BJ (cell line): ENCODE measurements at regions of chr2 and their contacts with region 1.

Region 1: GRCh38 chr2:27191053-27191829 is 20.6 kb upstream of the ATRAID start:
- DNase-seq: no peak
- H3K4me3 ChIP-seq: no peak overlapping the region
- H3K27me3 ChIP-seq: no peaks in the 10 kb centered on the region; the same call in 1 of the 2 replicates
- CTCF ChIP-seq: peak; percentile 74

Region 2: GRCh38 chr2:27095745-27096651 is 95.2 kb before region 1 on chr2:
- CTCF ChIA-PET with region 1: interaction called, 38 read pairs
- POLR2A ChIA-PET with region 1: no interaction called
- DNase-seq: no peak
- H3K4me3 ChIP-seq: no peak overlapping the region
- H3K27me3 ChIP-seq: no peaks in the 10 kb centered on the region
- CTCF ChIP-seq: no peak

Region 3: DNA sequence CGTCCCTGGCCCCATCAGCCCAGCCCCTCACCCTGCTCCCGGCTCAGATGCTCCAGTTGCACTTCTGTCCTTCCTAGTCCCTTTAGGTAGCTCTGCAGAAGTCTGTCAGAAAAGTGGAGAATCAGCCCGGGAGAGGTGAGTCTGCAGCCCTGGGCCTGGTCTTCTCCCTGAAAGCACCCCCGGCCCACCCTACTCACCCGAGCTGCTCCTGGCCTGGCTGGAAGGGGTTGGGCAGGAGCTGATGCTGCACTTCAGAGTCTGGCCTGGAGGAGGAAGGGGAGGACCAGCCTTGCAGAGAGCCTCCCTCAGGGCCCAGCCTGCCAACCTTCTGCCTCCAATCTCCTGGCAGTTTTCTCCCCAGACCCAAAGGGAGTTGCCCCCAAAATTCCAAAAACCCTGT is 88.9 kb before region 1 on chr2:
- CTCF ChIA-PET with region 1: interaction called, 38 read pairs
- POLR2A ChIA-PET with region 1: no interaction called
- DNase-seq: no peak
- H3K4me3 ChIP-seq: no peak overlapping the region
- H3K27me3 ChIP-seq: peaks cover 1% of the 10 kb centered on the region; the same call in 1 of the 2 replicates
- CTCF ChIP-seq: no peak

Region 4: DNA sequence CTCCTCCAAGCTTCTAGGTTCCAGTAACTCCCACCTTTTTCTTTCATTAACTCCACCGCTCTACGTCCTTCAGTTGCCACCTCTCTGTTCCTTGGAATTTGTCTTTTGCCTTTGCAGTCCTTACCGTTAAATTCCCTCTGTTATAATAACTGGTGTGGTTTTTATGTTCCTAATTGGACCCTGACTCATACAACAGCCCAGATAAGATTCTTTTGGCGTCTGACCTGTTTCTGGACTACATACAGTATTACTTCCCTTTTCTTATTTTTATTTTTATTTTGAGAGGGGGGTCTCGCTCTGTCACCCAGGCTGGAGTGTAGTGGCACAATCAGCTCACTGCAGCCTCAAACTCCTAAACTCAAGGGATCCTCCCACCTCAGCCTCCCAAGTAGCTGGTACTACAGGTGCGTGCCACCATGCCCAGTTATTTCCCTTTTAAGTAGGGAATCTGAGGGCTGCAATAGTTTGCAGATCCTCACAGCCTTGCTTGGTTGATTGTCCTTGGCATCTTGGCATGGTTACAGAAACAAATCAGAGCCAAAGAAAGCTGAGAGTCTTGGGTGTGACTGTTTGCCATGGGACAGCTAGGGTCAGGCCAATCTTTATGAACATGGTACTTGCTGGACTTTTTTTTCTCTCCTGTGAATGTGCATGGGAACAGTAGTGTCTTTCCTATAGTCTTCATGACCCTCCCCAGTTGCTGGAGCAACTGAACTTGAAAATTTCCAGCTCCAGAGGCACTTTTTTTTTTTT is 20.5 kb before region 1 on chr2:
- CTCF ChIA-PET with region 1: interaction called, 24 read pairs
- POLR2A ChIA-PET with region 1: no interaction called
- DNase-seq: no peak
- H3K4me3 ChIP-seq: no peak overlapping the region
- H3K27me3 ChIP-seq: peaks cover 24% of the 10 kb centered on the region
- CTCF ChIP-seq: no peak